A549 (cell line): ENCODE measurements at regions of chr20 and their contacts with region 1.

Region 1: GRCh38 chr20:51595058-51595532 is 52.6 kb upstream of the NFATC2 start:
- DNase-seq: peak; percentile 89 to 90
- ATAC-seq: peak; percentile 98 to 99
- H3K4me3 ChIP-seq: no peak overlapping the region
- H3K27ac ChIP-seq: peak overlapping the region; percentile 43 to 48; a peak in 3 of 6 replicates
- H3K4me1 ChIP-seq: peaks cover 5% of the 10 kb centered on the region
- CTCF ChIP-seq: peak; percentile 89
- EP300 ChIP-seq: no peak
- POLR2A ChIP-seq: no peak
- RAD21 ChIP-seq: peak; percentile 98 to 99

Region 2: DNA sequence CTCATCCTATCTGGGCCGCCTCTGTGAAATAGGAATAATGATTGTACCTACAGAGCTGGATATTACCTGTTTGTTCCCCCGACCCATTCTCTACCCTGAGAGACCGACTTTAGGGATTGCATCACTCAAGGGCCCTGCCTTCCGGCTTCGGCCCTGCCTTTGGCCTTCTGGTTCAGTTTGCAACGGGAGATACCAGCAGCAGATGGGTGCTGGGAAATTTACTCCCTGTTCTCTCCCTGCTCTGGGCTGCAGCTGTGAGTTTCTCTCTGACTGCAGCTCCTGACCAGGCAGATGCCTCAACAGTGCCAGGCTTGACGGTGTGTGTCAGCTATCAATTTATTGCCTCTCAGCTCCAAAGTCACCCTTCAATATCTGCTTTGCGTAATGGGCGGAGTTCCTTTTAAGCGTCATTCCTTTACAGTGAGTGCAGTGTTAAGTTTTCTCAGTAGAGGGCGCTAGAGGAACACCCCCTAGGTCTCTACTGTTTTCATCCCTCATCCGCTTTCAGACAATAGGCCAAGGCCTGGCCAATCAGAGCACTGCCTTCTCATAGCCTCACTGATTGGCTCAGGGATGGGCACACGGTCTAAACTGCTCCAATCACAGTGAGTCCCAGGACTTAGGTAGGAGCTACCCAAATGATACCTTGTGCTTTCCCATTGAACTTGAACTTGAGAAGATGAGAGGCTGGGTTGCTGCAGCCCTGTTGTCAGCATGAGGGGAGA is 602.2 kb before region 1 on chr20:
- CTCF ChIA-PET with region 1: interaction called, 54 read pairs
- POLR2A ChIA-PET with region 1: no interaction called
- DNase-seq: peak; percentile 89 to 90
- ATAC-seq: peak; percentile 71 to 98
- H3K4me3 ChIP-seq: no peak overlapping the region
- H3K27ac ChIP-seq: peak overlapping the region in 1 of 2 experiments; percentile 8; a peak in 2 of 6 replicates
- H3K4me1 ChIP-seq: peaks cover 13% of the 10 kb centered on the region
- CTCF ChIP-seq: peak; percentile 67
- EP300 ChIP-seq: no peak
- POLR2A ChIP-seq: no peak; the same call in 1 of the 2 replicates
- RAD21 ChIP-seq: peak; percentile 62 to 76

Region 3: DNA sequence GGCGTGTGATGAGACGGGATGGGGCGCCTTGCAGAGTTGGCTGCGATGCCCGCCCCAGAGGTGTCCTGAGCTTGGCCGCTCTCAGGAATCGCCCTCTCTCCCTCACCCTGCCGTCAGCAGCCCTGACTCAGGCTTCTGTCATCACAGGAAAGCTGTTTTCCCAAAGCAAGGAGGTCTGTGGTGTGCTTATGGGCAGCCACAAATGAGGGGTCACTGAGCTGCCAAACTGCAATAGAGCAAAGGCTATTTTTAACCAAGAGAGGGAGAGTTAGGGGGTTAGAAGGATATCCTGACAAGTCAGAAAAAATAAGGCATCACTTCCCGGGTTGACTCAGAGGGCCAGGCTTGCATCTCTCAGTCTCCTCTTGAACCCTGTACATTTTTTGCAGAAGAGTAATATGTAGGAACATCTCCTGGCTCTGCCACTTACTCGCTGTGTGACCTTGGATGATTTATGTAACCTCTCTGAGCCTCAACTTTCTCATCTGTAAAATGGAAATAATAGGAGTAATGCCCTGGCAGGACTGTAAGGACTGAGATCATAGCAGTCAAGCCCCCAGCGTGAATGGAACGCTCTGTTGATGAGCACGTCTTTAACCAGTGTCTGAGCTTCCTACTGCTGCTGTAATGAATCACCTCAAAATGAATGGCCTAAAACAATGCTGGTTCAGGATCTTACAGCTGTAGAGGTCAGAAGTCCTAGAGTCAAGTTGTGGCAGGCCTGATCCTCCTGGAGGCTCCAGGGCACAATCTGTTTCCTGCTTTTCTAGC is 234.5 kb before region 1 on chr20:
- CTCF ChIA-PET with region 1: interaction called, 171 read pairs
- POLR2A ChIA-PET with region 1: no interaction called
- DNase-seq: peak; percentile 59 to 85
- ATAC-seq: peak; percentile 95
- H3K4me3 ChIP-seq: no peak overlapping the region
- H3K27ac ChIP-seq: peak overlapping the region; percentile 80 to 89
- H3K4me1 ChIP-seq: peaks cover 29% of the 10 kb centered on the region
- CTCF ChIP-seq: no peak
- EP300 ChIP-seq: peak; percentile 74 to 90; a peak in 3 of 5 replicates
- POLR2A ChIP-seq: no peak
- RAD21 ChIP-seq: no peak

Region 4: GRCh38 chr20:51417250-51418136 is 177.6 kb before region 1 on chr20:
- CTCF ChIA-PET with region 1: interaction called, 15 read pairs
- POLR2A ChIA-PET with region 1: no interaction called
- DNase-seq: no peak
- ATAC-seq: no peak
- H3K4me3 ChIP-seq: no peak overlapping the region
- H3K27ac ChIP-seq: no peak overlapping the region
- H3K4me1 ChIP-seq: no peaks in the 10 kb centered on the region
- CTCF ChIP-seq: no peak
- EP300 ChIP-seq: no peak
- POLR2A ChIP-seq: no peak
- RAD21 ChIP-seq: no peak

Region 5: GRCh38 chr20:51562332-51563155 is 32.6 kb before region 1 on chr20:
- CTCF ChIA-PET with region 1: interaction called, 19 read pairs
- POLR2A ChIA-PET with region 1: interaction called, 5 read pairs
- DNase-seq: peak; percentile 65 to 90
- ATAC-seq: peak; percentile 64 to 76
- H3K4me3 ChIP-seq: peak overlapping the region; percentile 59
- H3K27ac ChIP-seq: peak overlapping the region; percentile 88 to 89
- H3K4me1 ChIP-seq: peaks cover 45% of the 10 kb centered on the region
- CTCF ChIP-seq: peak; percentile 41
- EP300 ChIP-seq: no peak
- POLR2A ChIP-seq: no peak
- RAD21 ChIP-seq: peak; percentile 39 to 71; a peak in 4 of 5 replicates

Region 6: GRCh38 chr20:51616060-51616459 is 21.0 kb after region 1 on chr20:
- CTCF ChIA-PET with region 1: interaction called, 31 read pairs
- POLR2A ChIA-PET with region 1: no interaction called
- DNase-seq: peak in 1 of 2 experiments; percentile 28
- ATAC-seq: peak; percentile 66 to 77; a peak in 4 of 6 replicates
- H3K4me3 ChIP-seq: no peak overlapping the region
- H3K27ac ChIP-seq: no peak overlapping the region
- H3K4me1 ChIP-seq: no peaks in the 10 kb centered on the region
- CTCF ChIP-seq: 0 out of 3 replicates have a peak, but pooled peaks have one; percentile 11
- EP300 ChIP-seq: no peak
- POLR2A ChIP-seq: no peak
- RAD21 ChIP-seq: peak in 1 of 2 experiments; percentile 49; a peak in 2 of 5 replicates